Dendritic cell treated with granulocyte-macrophage colony-stimulating factor and Interleukin-4, amounts not matched to agents 40 ng/mL and 50 ng/mL, for 4 days (primary cell): ENCODE measurements at regions of chr7 and their contacts with region 1.

Region 1: GRCh38 chr7:41940760-41941343 is 238.0 kb upstream of the INHBA start:
- H3K4me3 Mint-ChIP-seq: no peak overlapping the region
- H3K27ac Mint-ChIP-seq: no peak overlapping the region
- H3K4me1 Mint-ChIP-seq: peaks cover 31% of the 10 kb centered on the region
- H3K27me3 Mint-ChIP-seq: peaks cover 24% of the 10 kb centered on the region

Region 2: GRCh38 chr7:42886129-42886528 is 945.3 kb after region 1 on chr7:
- intact Hi-C with region 1: loop called (anchors 10 kb)
- H3K4me3 Mint-ChIP-seq: no peak overlapping the region
- H3K27ac Mint-ChIP-seq: no peak overlapping the region
- H3K4me1 Mint-ChIP-seq: peaks cover 27% of the 10 kb centered on the region
- H3K27me3 Mint-ChIP-seq: no peaks in the 10 kb centered on the region